ENCODE measurements at regions of chr2 and their contacts with region 1.

Region 1: GRCh38 chr2:102442967-102443828 is 20.2 kb downstream of the IL18RAP start:
- DNase-seq: peak; percentile 72
- ATAC-seq: peak; percentile 83
- H3K4me3 Mint-ChIP-seq: peak overlapping the region; percentile 41
- H3K27ac Mint-ChIP-seq: peak overlapping the region; percentile 65
- H3K4me1 Mint-ChIP-seq: peaks cover 12% of the 10 kb centered on the region
- H3K27me3 Mint-ChIP-seq: no peaks in the 10 kb centered on the region

Region 2: GRCh38 chr2:102020596-102021181 is 422.5 kb before region 1 on chr2:
- CTCF ChIA-PET with region 1: interaction called, 14 read pairs
- POLR2A ChIA-PET with region 1: interaction called, 3 read pairs
- DNase-seq: peak; percentile 86
- ATAC-seq: peak; percentile 86
- H3K4me3 Mint-ChIP-seq: no peak overlapping the region
- H3K27ac Mint-ChIP-seq: no peak overlapping the region
- H3K4me1 Mint-ChIP-seq: no peaks in the 10 kb centered on the region
- H3K27me3 Mint-ChIP-seq: peaks cover 5% of the 10 kb centered on the region

Region 3: DNA sequence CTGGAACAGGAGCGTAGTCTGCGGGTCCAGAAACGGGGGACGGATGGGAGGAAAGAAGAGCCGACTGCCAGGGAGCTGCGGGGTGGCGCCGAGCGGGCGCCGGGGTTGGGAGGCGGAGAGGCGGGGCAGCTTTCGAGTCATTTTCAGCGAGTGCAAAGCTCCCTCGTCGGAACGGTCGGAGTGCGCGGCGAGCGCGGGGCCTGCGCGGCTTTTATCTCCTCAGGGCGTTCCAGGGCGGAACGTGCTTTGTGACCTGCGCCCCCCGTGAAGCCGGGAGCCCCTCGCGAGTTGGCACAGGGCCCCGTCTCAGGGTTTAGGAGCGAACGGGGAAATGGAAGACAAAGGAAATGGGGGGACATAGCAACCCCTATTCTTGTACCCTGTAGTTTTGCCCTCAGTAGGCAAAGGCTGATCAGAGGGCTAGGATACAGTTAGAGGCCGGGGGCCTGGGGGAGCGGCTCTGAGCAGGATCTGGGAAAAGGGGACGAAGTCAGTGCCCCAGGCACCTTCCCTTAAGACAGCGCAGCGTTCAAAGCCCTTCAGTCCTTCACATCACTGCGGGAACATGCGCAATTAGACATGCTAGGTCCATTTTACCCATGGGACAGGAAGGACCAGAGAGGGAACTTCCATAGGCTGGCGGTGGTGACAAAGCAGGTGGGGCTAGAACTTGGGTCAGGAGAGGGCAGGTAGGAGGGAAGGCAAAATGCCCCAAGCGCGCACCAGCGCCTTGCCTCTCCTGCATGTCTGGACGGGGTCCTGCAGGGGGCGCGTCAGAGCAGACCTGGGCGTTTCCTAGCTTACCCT is 192.0 kb before region 1 on chr2:
- CTCF ChIA-PET with region 1: interaction called, 27 read pairs
- POLR2A ChIA-PET with region 1: no interaction called
- DNase-seq: peak; percentile 76
- ATAC-seq: peak; percentile 78
- H3K4me3 Mint-ChIP-seq: peak overlapping the region; percentile 79
- H3K27ac Mint-ChIP-seq: peak overlapping the region; percentile 62
- H3K4me1 Mint-ChIP-seq: peaks cover 45% of the 10 kb centered on the region
- H3K27me3 Mint-ChIP-seq: peaks cover 5% of the 10 kb centered on the region

Region 4: GRCh38 chr2:102301867-102302362 is 141.3 kb before region 1 on chr2:
- CTCF ChIA-PET with region 1: interaction called, 37 read pairs
- POLR2A ChIA-PET with region 1: no interaction called
- DNase-seq: peak; percentile 82
- ATAC-seq: peak; percentile 98
- H3K4me3 Mint-ChIP-seq: peak overlapping the region; percentile 32
- H3K27ac Mint-ChIP-seq: peak overlapping the region; percentile 65
- H3K4me1 Mint-ChIP-seq: peaks cover 36% of the 10 kb centered on the region
- H3K27me3 Mint-ChIP-seq: no peaks in the 10 kb centered on the region

Region 5: DNA sequence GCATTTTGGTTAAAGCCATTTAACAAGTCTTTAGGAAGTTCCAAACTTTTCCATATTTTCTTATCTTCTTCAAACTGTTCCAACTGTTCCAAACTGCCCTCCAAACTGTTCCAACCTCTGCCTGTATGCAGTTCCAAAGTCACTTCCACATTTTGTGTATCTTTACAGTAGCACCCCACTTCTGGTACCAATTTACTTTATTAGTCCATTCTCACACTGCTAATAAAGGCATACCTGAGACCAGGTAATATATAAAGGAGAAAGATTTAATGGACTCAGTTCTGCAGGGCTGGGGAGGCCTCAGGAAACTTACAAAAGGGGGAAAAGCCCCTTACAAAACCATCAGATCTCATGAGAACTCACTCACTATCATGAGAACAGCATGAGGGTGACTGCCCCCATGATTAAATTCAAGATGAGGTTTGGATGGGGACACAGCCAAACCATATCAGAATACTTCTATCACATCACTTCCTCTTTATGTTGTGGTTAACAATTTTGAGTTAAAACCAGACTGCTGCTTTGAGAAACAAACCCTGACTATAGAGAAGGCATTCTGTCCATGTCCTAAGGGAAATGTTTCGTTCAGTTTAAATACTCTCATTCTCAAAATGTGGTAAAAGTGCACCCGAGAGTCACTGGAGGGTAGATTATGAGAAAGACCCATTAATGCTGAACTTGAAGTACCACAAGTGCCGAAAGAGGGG is 76.6 kb before region 1 on chr2:
- CTCF ChIA-PET with region 1: interaction called, 16 read pairs
- POLR2A ChIA-PET with region 1: no interaction called
- DNase-seq: no peak
- ATAC-seq: peak; percentile 34
- H3K4me3 Mint-ChIP-seq: peak overlapping the region; percentile 54
- H3K27ac Mint-ChIP-seq: peak overlapping the region; percentile 88
- H3K4me1 Mint-ChIP-seq: peaks cover 59% of the 10 kb centered on the region
- H3K27me3 Mint-ChIP-seq: no peaks in the 10 kb centered on the region

Region 6: GRCh38 chr2:102424754-102425153 is 18.4 kb before region 1 on chr2:
- CTCF ChIA-PET with region 1: interaction called, 39 read pairs
- POLR2A ChIA-PET with region 1: no interaction called
- DNase-seq: no peak
- ATAC-seq: no peak
- H3K4me3 Mint-ChIP-seq: no peak overlapping the region
- H3K27ac Mint-ChIP-seq: peak overlapping the region; percentile 46
- H3K4me1 Mint-ChIP-seq: peaks cover 81% of the 10 kb centered on the region
- H3K27me3 Mint-ChIP-seq: no peaks in the 10 kb centered on the region

Measured in activated CD8-positive, alpha-beta T cell treated with anti-CD3 and anti-CD28 coated beads, Interleukin-2, amount 10 ng/mL, durations not matched to agents 7 days and 5 days (primary cell).